ENCODE measurements at regions of chr22 and their contacts with region 1.

Region 1: GRCh38 chr22:27512283-27512761 is 289.2 kb downstream of the MN1 start:
- DNase-seq: peak; percentile 98
- H3K4me3 ChIP-seq: peak overlapping the region in 2 of 3 experiments; percentile 14 to 21
- H3K27ac ChIP-seq: peak overlapping the region; percentile 81
- H3K4me1 ChIP-seq: peaks cover 28% of the 10 kb centered on the region
- H3K27me3 ChIP-seq: no peaks in the 10 kb centered on the region
- CTCF ChIP-seq: no peak

Region 2: DNA sequence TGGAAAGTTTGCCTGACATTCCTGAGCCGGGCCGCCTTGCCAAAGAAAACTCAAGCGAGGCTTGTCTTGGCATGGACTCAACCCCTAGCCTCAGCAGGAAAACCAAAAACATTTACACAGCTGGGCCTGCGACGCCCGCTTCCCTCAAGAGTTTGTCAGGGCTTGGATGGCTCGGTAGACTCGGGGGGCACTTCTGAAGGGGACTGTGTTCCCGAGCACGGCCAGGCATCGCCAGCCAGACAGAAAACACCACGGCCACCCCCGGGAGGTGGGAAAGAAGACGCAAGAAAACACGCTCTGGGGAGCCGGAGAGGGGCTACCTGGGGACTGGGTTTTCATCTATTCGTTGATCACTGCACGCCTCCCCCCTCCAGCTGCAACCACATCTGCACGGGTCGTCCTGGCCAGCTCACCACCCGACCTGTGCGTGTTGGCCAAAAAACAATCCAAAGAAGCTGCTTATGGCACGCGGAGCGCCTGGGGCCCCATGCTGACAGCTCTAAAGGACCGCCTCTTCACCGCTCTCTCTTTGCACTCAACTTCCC is 91.4 kb before region 1 on chr22:
- CTCF ChIA-PET with region 1: no interaction called
- dilution Hi-C with region 1: no loop called
- in situ Hi-C with region 1: no loop called
- intact Hi-C with region 1: loop called (anchors 1 kb)
- DNase-seq: peak; percentile 82
- H3K4me3 ChIP-seq: no peak overlapping the region
- H3K27ac ChIP-seq: peak overlapping the region; percentile 52
- H3K4me1 ChIP-seq: peaks cover 44% of the 10 kb centered on the region
- H3K27me3 ChIP-seq: no peaks in the 10 kb centered on the region
- CTCF ChIP-seq: no peak

Measured in mammary epithelial cell (primary cell).